ENCODE measurements at regions of chr7 and their contacts with region 1.

Region 1: DNA sequence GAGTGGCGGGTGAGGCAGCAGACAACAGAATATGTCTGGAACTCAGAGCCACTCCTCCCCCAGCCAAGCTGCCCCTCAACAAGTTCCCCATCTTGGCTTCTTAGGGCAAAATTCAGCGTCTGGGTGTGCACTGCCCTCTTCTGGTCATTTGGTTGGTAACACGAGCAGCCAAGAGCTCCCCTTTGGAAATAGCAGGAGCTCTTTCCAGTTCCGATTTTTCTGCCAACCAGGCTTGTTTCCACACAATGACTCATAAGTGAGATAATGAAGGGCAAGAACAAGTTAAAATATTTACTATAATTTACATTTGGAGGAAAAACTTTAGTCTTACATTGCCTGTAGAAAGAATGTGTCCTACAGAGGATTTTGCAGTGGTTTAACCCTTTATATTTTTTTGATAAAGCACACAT is 70.5 kb downstream of the ADCYAP1R1 start:
- H3K4me3 ChIP-seq: no peak overlapping the region
- H3K27ac ChIP-seq: no peak overlapping the region
- H3K4me1 ChIP-seq: no peaks in the 10 kb centered on the region
- CTCF ChIP-seq: peak; percentile 36; the same call in 1 of the 2 replicates

Region 2: GRCh38 chr7:30800785-30801252 is 321.8 kb before region 1 on chr7:
- CTCF ChIA-PET with region 1: interaction called, 20 read pairs
- POLR2A ChIA-PET with region 1: no interaction called
- H3K4me3 ChIP-seq: no peak overlapping the region
- H3K27ac ChIP-seq: no peak overlapping the region
- H3K4me1 ChIP-seq: no peaks in the 10 kb centered on the region
- CTCF ChIP-seq: 0 out of 2 replicates have a peak, but pooled peaks have one; percentile 35

Region 3: DNA sequence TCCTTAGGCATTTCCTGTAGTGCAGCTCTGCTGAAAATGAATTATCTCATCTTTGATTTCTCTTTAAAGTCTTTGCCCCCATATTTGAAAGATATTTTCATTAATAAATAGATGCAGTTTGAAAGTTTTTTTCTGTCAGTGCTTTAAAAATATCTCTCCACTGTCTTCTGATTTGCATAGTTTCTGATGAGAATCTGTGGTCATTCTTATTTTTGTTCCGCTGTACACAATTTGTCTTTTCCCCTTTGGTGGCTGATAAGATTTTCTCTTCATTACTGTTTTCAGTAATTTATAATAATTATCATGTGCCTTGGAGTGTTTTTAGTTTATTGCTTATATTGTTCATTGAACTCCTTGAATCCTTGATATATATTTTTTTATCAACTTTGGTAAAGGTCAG is 165.9 kb before region 1 on chr7:
- CTCF ChIA-PET with region 1: interaction called, 10 read pairs
- POLR2A ChIA-PET with region 1: no interaction called
- H3K4me3 ChIP-seq: no peak overlapping the region
- H3K27ac ChIP-seq: no peak overlapping the region
- H3K4me1 ChIP-seq: no peaks in the 10 kb centered on the region
- CTCF ChIP-seq: no peak

Region 4: DNA sequence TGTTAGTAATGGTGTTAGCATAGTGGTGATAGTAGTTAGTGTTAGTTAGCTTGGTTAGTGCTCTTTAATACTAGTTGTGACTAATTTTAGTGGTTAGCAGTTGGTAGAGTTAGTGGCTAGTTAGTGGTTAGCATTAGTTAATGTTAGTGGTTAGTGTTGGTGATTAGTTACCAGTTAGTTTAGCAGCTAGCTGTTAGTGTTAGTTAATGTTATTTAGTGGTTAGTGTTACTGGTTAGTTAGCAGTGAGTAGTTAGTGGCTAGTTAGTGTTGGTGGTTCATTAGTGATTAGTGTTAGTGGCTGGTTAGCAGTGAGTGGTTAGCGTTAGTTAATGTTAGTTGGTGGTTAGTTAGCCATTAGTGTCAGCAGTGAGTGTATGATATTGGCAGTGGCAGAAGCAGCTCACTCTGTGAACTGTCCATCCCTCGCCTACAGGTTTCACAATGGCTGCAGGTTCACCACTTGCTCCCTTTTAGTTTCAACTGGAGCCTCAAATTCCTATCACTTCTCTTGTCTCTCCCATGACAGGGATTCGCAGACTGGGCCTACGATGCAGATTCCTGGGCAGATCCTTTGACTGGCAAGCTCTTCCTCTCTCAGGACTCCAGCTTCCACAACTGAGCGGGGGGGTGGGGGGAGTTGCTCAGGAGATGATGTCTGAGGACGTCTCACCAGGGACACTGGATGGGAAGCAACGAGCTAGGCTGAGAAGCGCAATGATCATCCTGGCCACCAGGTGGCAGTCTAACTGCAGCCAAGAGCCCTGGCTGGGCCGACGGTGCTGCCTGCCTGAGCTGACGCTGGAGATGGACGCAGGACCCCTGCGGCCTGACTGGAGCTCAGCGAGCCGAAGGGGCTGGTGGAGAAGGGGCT is 139.4 kb before region 1 on chr7:
- CTCF ChIA-PET with region 1: interaction called, 373 read pairs
- POLR2A ChIA-PET with region 1: interaction called, 16 read pairs
- H3K4me3 ChIP-seq: no peak overlapping the region
- H3K27ac ChIP-seq: no peak overlapping the region
- H3K4me1 ChIP-seq: no peaks in the 10 kb centered on the region
- CTCF ChIP-seq: peak; percentile 85

Region 5: DNA sequence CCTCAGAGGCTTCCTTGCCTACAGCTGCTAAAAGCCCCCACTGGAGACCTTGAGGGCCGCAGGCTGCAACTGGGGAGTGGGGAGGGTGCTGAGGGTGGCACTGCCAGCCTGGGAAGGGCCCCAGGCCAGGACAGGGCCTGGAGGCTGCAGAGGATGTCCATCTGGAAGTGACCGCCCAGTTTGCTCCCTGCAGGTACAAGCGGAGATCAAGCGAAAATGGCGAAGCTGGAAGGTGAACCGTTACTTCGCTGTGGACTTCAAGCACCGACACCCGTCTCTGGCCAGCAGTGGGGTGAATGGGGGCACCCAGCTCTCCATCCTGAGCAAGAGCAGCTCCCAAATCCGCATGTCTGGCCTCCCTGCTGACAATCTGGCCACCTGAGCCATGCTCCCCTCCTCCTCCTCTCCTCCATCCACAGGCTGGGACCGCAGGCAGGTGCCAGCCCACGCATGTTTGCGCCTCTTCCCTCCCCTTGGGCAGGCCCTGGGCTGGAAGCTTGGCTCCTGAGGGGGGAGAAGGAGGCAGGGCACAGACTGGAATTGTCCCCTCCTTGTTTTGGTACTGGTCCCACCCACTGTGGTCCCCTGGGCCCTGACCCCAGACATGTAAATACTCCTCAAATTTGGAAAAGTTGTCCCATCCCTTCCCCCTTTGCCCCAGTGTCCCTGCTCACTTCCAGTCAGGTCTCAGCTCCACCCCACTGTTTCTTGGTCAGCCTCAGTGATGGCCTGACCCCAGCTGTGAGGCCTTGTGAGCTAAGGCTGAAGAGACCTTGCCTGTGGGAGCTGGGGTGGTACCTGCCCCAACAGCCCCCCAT is 16.1 kb before region 1 on chr7:
- CTCF ChIA-PET with region 1: interaction called, 20 read pairs
- POLR2A ChIA-PET with region 1: no interaction called
- H3K4me3 ChIP-seq: no peak overlapping the region
- H3K27ac ChIP-seq: no peak overlapping the region
- H3K4me1 ChIP-seq: no peaks in the 10 kb centered on the region
- CTCF ChIP-seq: no peak

Region 6: DNA sequence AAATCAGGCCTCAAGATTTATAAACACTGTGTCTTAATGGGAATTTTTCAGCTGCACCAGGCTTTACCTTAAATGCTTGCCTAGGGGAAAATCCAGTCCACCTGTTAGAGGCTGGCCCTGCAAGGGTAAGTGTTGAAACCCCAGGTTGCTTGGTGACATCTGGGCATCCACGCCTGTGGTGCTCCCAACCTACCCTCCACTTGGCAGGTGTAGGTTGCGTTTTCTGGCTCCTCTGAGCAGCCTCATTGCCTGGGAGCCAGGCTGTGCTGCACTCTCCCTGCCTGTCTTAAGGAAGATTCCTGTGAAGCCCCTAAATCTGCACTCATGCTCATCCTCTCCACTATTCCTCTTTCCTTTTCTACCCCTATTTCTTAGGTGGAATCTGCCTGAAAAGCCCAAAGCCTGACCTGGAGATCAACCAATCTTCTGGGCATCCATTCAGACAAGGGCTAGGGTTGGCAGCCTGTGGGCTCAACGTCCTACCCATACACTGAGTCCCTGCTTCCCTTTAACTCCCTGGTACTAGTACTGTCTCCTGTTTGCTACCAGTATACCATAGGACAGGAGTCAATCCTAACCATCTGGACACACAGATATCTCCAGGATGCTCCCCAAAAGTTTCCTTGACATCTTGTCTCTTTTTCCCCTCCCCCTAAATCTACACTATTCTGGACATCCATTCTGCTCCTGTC is 797.2 kb after region 1 on chr7:
- CTCF ChIA-PET with region 1: no interaction called
- POLR2A ChIA-PET with region 1: no interaction called
- H3K4me3 ChIP-seq: no peak overlapping the region
- H3K27ac ChIP-seq: no peak overlapping the region
- H3K4me1 ChIP-seq: no peaks in the 10 kb centered on the region
- CTCF ChIP-seq: no peak